Heart left ventricle (tissue), 16 donors: ENCODE measurements at regions of chr21 and their contacts with region 1.

Region 1: GRCh38 chr21:29298348-29299045 is at the start of gene BACH1:
- DNase-seq: peak; percentile 91 to 95 (median 93)
- ATAC-seq: peak; percentile 75 to 94 (median 91)
- H3K4me3 ChIP-seq: peak within 1 kb of the TSS; percentile 52 to 98 (median 75)
- H3K27ac ChIP-seq: peak within 1 kb of the TSS; percentile 83 to 99 (median 93)
- H3K4me1 ChIP-seq: peaks cover 4 to 55% (median 35%) of the 10 kb centered on the region in 12 donors
- H3K27me3 ChIP-seq: no peaks in the 10 kb centered on the region
- CTCF ChIP-seq: peak; percentile 23 to 72 (median 46)
- POLR2A ChIP-seq: peak in 1 of 2 donors; percentile 91
- total RNA-seq, gene BACH1: 16.7 to 83.4 (median 40.0) TPM

Region 2: DNA sequence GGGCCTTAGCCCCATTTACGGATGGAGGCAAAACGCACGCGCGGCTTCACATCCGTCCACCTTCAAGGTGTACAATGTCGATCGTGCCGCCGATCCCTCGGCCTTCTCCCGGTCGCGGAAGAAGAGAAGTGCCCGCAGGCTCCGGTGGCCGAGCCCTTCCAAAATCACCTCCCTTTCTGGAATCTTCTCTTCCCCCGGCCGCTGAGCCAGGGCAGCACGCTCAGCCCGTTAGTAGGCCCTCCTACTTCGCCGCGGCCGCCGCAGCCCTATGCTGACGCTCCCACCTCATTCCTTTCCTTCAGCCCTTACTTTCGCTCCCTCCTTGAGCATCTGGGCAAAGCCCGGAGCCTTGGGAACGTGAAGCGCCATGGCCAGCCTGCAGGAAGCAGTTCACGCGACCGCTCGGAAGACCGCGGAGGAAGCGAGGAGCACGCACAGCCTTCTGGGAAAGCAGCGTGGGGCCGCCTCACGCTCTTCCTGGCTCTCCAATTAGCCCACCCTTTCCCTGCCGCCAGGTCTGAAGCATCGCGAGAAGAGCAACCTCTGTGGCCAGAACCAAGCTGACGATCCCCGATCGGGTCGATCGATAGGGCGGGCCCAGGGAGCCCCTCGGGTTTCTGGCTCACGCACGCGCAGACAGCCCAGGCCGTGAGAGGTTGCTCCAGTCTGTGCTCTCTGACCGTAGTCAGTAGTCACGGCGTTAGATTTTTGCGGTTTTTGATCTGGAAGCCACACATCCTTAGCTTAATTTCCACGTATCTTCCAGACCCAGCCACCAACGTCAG is 225.1 kb before region 1 on chr21 and contains the start of gene CCT8:
- intact Hi-C with region 1: loop called in 2 of 10 experiments (anchors 5 to 10 kb)
- DNase-seq: peak; percentile 99 to 100 (median 100)
- ATAC-seq: peak; percentile 97 to 99 (median 98)
- H3K4me3 ChIP-seq: peak within 1 kb of the TSS; percentile 38 to 99 (median 86)
- H3K27ac ChIP-seq: peak within 1 kb of the TSS; percentile 84 to 95 (median 90)
- H3K4me1 ChIP-seq: peaks cover 6 to 49% (median 25%) of the 10 kb centered on the region in 12 donors
- H3K27me3 ChIP-seq: no peaks in the 10 kb centered on the region
- CTCF ChIP-seq: no peak
- POLR2A ChIP-seq: peak in 1 of 2 donors; percentile 86
- total RNA-seq, gene CCT8: 88.8 to 147 (median 110) TPM

Region 3: GRCh38 chr21:29148530-29148929 is 150.0 kb before region 1 on chr21:
- intact Hi-C with region 1: no loop called
- DNase-seq: peak in 1 of 5 donors; percentile 27
- ATAC-seq: no peak
- H3K4me3 ChIP-seq: no peak overlapping the region
- H3K27ac ChIP-seq: peak overlapping the region in 1 of 12 donors; percentile 27
- H3K4me1 ChIP-seq: peaks cover 0 to 70% (median 32%) of the 10 kb centered on the region in 12 donors
- H3K27me3 ChIP-seq: no peaks in the 10 kb centered on the region
- CTCF ChIP-seq: no peak
- POLR2A ChIP-seq: no peak

Region 4: GRCh38 chr21:29164325-29164942 is 134.1 kb before region 1 on chr21:
- intact Hi-C with region 1: loop called in 3 of 10 experiments (anchors 5 kb)
- DNase-seq: no peak
- ATAC-seq: peak; percentile 54 to 84 (median 71)
- H3K4me3 ChIP-seq: no peak overlapping the region
- H3K27ac ChIP-seq: peak overlapping the region in 4 of 12 donors; percentile 47 to 76 (median 65)
- H3K4me1 ChIP-seq: peaks cover 0 to 46% (median 9%) of the 10 kb centered on the region in 12 donors
- H3K27me3 ChIP-seq: no peaks in the 10 kb centered on the region
- CTCF ChIP-seq: peak; percentile 48 to 85 (median 72)
- POLR2A ChIP-seq: no peak

Region 5: GRCh38 chr21:29181799-29182470 is 116.6 kb before region 1 on chr21:
- intact Hi-C with region 1: loop called in 3 of 10 experiments (anchors 10 kb)
- DNase-seq: peak in 1 of 5 donors; percentile 33
- ATAC-seq: peak; percentile 79 to 92 (median 88)
- H3K4me3 ChIP-seq: peak overlapping the region in 11 of 12 donors; percentile 5 to 53 (median 39)
- H3K27ac ChIP-seq: peak overlapping the region; percentile 5 to 95 (median 76)
- H3K4me1 ChIP-seq: peaks cover 0 to 58% (median 13%) of the 10 kb centered on the region in 12 donors
- H3K27me3 ChIP-seq: no peaks in the 10 kb centered on the region
- CTCF ChIP-seq: no peak
- POLR2A ChIP-seq: no peak

Region 6: GRCh38 chr21:29342363-29342957 is 44.0 kb after region 1 on chr21:
- intact Hi-C with region 1: loop called in 6 of 10 experiments (anchors 2 to 5 kb)
- DNase-seq: peak; percentile 51 to 80 (median 76)
- ATAC-seq: peak; percentile 74 to 96 (median 90)
- H3K4me3 ChIP-seq: peak overlapping the region in 5 of 12 donors; percentile 6 to 36 (median 16)
- H3K27ac ChIP-seq: peak overlapping the region in 11 of 12 donors; percentile 6 to 70 (median 48)
- H3K4me1 ChIP-seq: peaks cover 2 to 72% (median 29%) of the 10 kb centered on the region in 12 donors
- H3K27me3 ChIP-seq: no peaks in the 10 kb centered on the region
- CTCF ChIP-seq: no peak
- POLR2A ChIP-seq: no peak